ENCODE measurements at regions of chr18 and their contacts with region 1.

Region 1: GRCh38 chr18:7291046-7291445 is 60.2 kb downstream of the LRRC30 start:
- DNase-seq: no peak
- H3K4me3 ChIP-seq: no peak overlapping the region
- H3K27ac ChIP-seq: no peak overlapping the region
- H3K4me1 ChIP-seq: no peaks in the 10 kb centered on the region
- H3K27me3 ChIP-seq: no peaks in the 10 kb centered on the region
- CTCF ChIP-seq: no peak
- EP300 ChIP-seq: no peak
- POLR2A ChIP-seq: no peak

Region 2: DNA sequence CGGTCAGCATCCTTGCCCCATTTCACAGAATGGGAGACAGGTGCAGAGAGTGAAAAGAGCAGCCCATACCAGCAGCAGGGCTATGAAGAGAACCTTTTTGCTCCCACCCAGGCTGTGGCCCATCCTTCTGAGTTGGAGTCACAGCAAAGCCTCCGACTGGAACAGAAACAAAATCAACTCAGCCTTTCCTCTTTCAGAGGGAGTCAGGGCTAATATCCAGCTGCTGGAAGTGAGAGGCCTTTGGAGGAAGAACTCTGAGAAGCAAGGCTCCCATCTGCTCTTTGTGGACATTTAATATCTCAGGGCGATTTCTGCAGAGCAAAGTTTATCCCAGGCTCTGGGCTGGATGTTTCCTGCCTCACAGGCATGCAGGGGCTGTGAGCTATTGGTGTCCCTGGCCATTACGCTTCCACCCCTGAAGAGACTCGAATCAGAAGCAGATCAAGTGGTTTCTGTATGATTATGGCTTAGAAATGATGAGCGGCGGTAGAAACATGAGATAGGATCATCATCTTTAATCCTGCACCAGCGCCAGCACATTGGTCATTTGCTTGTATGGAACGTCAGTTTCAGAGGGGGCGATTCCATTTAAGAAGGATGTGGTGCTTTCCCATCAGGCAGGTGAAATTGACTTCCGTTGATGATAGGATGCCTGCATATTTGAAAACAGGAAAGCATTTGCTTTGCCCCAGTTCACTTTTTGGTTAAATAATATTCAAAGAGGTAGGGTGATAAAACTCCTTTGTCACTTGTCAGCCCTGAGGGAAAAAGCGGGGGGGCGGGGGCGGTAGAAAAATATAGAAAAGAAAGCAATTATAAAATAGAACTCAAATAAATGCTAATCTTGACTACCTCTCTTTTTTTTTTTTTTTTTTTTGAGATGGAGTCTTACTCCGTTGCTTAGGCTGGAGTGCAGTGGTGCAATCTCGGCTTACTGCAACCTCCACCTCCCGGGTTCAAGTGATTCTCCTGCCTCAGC is 92.2 kb after region 1 on chr18:
- in situ Hi-C with region 1: loop called in 1 of 4 experiments (anchors 25 kb)
- intact Hi-C with region 1: no loop called
- DNase-seq: no peak
- H3K4me3 ChIP-seq: no peak overlapping the region
- H3K27ac ChIP-seq: no peak overlapping the region
- H3K4me1 ChIP-seq: no peaks in the 10 kb centered on the region
- H3K27me3 ChIP-seq: no peaks in the 10 kb centered on the region
- CTCF ChIP-seq: no peak
- EP300 ChIP-seq: no peak
- POLR2A ChIP-seq: no peak

Measured in transverse colon (tissue), 4 donors.